ENCODE measurements at regions of chr1 and their contacts with region 1.

Region 1: DNA sequence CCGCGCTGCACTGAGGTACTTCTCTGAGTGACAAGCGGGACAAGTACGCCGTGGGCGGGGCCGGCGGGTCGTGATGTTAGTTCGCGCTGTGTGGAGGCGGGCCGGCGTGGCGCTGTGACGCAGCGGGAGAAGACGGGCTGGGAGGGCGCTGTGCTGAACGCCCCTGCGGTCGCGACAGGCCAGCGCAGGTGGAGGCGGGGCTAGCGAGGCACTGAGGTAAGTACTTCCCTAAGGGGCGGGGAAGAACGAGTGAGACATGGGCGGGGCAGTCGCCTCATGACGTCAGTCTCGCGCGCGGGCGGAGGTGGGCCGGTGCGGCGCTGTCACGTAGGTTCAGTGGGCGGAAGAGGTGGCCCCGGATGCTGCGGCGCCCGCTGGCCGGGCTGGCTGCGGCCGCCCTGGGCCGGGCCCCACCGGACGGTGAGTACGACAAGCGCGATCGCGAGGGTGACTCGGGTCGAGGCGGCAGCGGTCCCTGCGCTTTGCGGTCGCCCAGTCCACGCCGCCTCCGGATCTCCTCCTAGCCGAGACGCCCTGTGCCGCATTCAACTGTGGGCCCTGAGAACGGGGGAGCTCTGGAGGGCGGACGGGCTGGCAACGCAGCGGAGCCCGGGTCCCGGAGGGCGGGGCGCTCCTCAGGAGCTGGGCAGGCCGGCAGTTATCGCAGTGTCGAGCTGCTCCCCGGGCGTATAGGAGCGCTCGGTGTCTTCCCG is at the start of gene GUK1:
- DNase-seq: peak; percentile 100
- H3K4me3 ChIP-seq: peak within 1 kb of the TSS; percentile 70 to 96 (median 88)
- H3K27ac ChIP-seq: peak within 1 kb of the TSS; percentile 93 to 99 (median 96)
- H3K4me1 ChIP-seq: peaks cover 0 to 39% (median 38%) of the 10 kb centered on the region in 4 donors
- H3K27me3 ChIP-seq: no peaks in the 10 kb centered on the region
- CTCF ChIP-seq: peak in 1 of 4 experiments; percentile 15
- EP300 ChIP-seq: peak in 2 of 4 donors; percentile 8 to 95
- POLR2A ChIP-seq: peak; percentile 87 to 95
- total RNA-seq, gene GUK1: 225 to 366 (median 303) TPM

Region 2: DNA sequence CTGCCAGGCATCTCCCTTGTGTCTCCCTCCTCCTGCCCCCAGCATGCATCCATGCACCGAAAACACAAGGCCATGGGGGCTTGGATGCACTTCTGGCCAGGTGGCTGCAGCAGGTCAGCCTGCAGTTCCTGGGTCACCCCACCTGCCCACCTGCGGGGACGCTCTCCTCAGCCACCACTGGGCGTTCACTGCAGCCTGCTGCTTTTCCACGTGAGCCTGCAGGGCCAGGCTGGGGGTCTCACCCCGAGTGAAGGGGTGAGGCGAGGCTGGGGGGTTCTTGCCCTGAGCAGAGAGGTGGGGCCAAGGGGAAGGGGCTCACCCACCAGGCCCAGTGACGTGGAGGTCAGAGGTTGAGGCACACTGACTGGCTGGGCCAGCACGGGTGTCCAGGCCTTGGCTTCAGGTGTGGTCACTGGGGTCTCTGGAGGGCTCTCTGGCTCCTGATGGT is 257.0 kb before region 1 on chr1:
- intact Hi-C with region 1: no loop called
- DNase-seq: peak; percentile 56
- H3K4me3 ChIP-seq: no peak overlapping the region
- H3K27ac ChIP-seq: no peak overlapping the region
- H3K4me1 ChIP-seq: peaks cover 0 to 31% (median 22%) of the 10 kb centered on the region in 4 donors
- H3K27me3 ChIP-seq: no peaks in the 10 kb centered on the region
- CTCF ChIP-seq: no peak
- EP300 ChIP-seq: no peak
- POLR2A ChIP-seq: no peak

Region 3: GRCh38 chr1:227999056-227999930 is 140.8 kb before region 1 on chr1:
- intact Hi-C with region 1: no loop called
- DNase-seq: peak; percentile 62
- H3K4me3 ChIP-seq: no peak overlapping the region
- H3K27ac ChIP-seq: no peak overlapping the region
- H3K4me1 ChIP-seq: peaks cover 0 to 1% (median 0%) of the 10 kb centered on the region in 4 donors
- H3K27me3 ChIP-seq: peaks cover 5 to 28% (median 10%) of the 10 kb centered on the region in 3 donors
- CTCF ChIP-seq: peak in 1 of 4 experiments; percentile 48
- EP300 ChIP-seq: no peak
- POLR2A ChIP-seq: no peak

Region 4: DNA sequence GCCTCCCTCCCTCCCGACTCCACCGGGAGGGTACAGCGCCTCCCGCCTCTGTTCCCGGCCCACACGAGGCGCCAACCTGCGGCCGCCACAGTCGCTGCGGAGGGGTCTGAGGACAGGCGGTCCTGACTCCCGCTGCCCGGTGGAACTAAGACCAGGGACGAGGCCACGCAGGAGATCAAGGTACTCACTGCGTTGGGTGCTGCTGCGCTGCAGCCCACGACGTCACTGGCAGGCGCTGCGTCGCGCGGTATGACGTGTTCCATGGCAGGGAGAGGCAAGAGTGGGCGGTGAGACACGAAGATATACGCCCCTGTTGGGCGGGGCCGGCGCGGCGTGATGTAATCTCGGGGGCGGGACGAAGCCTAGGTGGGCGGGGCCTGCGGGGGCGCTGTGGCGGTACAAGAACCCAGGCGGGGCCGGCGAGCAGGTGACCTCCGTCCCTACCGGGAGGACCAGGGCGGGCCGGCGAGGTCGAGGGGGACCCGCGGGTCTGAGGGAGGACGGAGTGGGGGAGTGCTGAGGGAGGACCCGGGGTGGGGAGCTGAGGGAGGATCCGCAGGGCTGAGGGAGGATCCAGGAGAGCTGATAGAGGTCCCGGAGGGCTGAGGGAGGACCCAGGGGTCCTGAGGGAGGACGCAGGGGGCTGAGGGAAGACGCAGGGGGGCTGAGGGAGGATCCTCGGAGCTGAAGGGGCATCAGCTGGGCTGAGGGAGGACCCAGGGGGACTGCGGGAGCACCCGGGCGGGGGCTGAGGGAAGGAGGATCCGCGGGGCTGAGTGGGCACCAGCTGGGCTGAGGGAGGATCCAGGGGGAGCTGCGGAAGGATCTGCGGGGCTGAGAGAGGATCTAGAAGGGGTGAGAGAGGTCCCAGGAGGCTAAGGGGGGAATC is 30.8 kb before region 1 on chr1 and contains the start of gene MRPL55:
- intact Hi-C with region 1: loop called (anchors 2 kb)
- DNase-seq: peak; percentile 99
- H3K4me3 ChIP-seq: peak within 1 kb of the TSS; percentile 72 to 98 (median 88)
- H3K27ac ChIP-seq: peak within 1 kb of the TSS; percentile 89 to 97 (median 96)
- H3K4me1 ChIP-seq: peaks cover 0 to 34% (median 27%) of the 10 kb centered on the region in 4 donors
- H3K27me3 ChIP-seq: no peaks in the 10 kb centered on the region
- CTCF ChIP-seq: no peak
- EP300 ChIP-seq: peak in 1 of 4 donors; percentile 72
- POLR2A ChIP-seq: peak; percentile 95 to 96
- total RNA-seq, gene MRPL55: 62.0 to 90.6 (median 79.3) TPM

Region 5: DNA sequence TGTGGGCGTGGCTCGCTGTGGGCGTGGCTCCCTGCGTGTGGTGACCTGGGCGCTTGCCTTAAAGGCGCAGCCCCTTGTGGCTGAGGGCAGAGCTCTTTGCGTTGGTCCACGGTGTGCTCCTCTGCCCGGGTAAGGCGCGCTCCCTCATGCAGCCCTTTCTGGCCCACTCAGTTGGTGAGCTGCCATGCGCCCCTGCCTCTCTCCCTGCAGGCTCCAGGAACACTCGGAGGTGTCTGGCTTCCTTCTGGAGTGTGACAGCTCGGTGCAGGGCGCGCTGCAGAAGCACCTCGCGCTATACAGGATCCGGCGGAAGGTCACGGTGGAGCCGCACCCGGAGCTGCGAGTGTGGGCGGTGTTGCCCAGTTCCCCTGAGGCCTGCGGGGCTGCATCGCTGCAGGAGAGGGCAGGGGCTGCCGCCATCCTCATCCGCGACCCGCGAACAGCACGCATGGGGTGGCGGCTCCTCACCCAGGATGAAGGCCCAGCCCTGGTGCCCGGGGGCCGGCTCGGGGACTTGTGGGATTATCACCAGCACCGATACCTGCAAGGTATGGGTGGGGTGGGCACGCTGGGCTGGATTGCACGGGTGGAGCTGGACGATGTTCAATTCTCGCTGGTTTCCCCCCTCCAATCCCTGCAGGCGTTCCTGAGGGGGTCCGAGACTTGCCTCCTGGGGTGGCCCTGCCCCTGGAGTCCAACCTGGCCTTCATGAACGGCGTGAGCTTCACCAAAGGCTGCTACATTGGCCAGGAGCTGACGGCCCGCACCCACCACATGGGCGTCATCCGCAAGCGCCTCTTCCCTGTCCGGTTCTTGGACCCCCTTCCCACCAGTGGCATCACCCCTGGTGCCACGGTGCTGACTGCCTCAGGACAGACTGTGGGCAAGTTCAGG is 34.6 kb after region 1 on chr1:
- intact Hi-C with region 1: loop called (anchors 5 kb)
- DNase-seq: peak; percentile 65
- H3K4me3 ChIP-seq: peak overlapping the region in 2 of 4 donors; percentile 35 to 52
- H3K27ac ChIP-seq: peak overlapping the region in 2 of 4 donors; percentile 28 to 64
- H3K4me1 ChIP-seq: peaks cover 0 to 38% (median 16%) of the 10 kb centered on the region in 4 donors
- H3K27me3 ChIP-seq: no peaks in the 10 kb centered on the region
- CTCF ChIP-seq: no peak
- EP300 ChIP-seq: no peak
- POLR2A ChIP-seq: no peak

Region 6: GRCh38 chr1:228275739-228276421 is 135.8 kb after region 1 on chr1:
- intact Hi-C with region 1: loop called (anchors 10 kb)
- DNase-seq: peak; percentile 96
- H3K4me3 ChIP-seq: peak overlapping the region; percentile 51 to 72 (median 59)
- H3K27ac ChIP-seq: peak overlapping the region; percentile 74 to 80 (median 78)
- H3K4me1 ChIP-seq: peaks cover 0 to 26% (median 19%) of the 10 kb centered on the region in 4 donors
- H3K27me3 ChIP-seq: no peaks in the 10 kb centered on the region
- CTCF ChIP-seq: no peak
- EP300 ChIP-seq: no peak
- POLR2A ChIP-seq: no peak

Region 7: GRCh38 chr1:228486596-228487335 is 346.7 kb after region 1 on chr1:
- intact Hi-C with region 1: loop called (anchors 10 kb)
- DNase-seq: peak; percentile 83
- H3K4me3 ChIP-seq: peak overlapping the region; percentile 50 to 86 (median 73)
- H3K27ac ChIP-seq: peak overlapping the region; percentile 96 to 99 (median 96)
- H3K4me1 ChIP-seq: peaks cover 4 to 40% (median 29%) of the 10 kb centered on the region in 4 donors
- H3K27me3 ChIP-seq: no peaks in the 10 kb centered on the region
- CTCF ChIP-seq: no peak
- EP300 ChIP-seq: peak in 1 of 4 donors; percentile 54
- POLR2A ChIP-seq: peak in 1 of 2 donors; percentile 29

Measured in sigmoid colon (tissue), 7 donors.